B cell (primary cell): ENCODE measurements at regions of chr18 and their contacts with region 1.

Region 1: GRCh38 chr18:76803814-76804213 is 18.5 kb upstream of the ZNF236 start:
- DNase-seq: peak; percentile 76
- ATAC-seq: peak; percentile 66
- H3K4me3 ChIP-seq: no peak overlapping the region
- H3K4me3 Mint-ChIP-seq: peak overlapping the region; percentile 56
- H3K27ac ChIP-seq: no peak overlapping the region
- H3K27ac Mint-ChIP-seq: no peak overlapping the region
- H3K4me1 ChIP-seq: peaks cover 15 to 19% of the 10 kb centered on the region in 2 donors
- H3K4me1 Mint-ChIP-seq: peaks cover 13% of the 10 kb centered on the region
- H3K27me3 ChIP-seq: peaks cover 0 to 9% (median 2%) of the 10 kb centered on the region in 4 experiments
- H3K27me3 Mint-ChIP-seq: peaks cover 5% of the 10 kb centered on the region
- CTCF ChIP-seq: peak; percentile 90

Region 2: GRCh38 chr18:76672627-76673026 is 131.2 kb before region 1 on chr18:
- CTCF ChIA-PET with region 1: no interaction called
- POLR2A ChIA-PET with region 1: no interaction called
- intact Hi-C with region 1: no loop called
- DNase-seq: no peak
- ATAC-seq: no peak
- H3K4me3 ChIP-seq: no peak overlapping the region
- H3K4me3 Mint-ChIP-seq: no peak overlapping the region
- H3K27ac ChIP-seq: no peak overlapping the region
- H3K27ac Mint-ChIP-seq: no peak overlapping the region
- H3K4me1 ChIP-seq: no peaks in the 10 kb centered on the region
- H3K4me1 Mint-ChIP-seq: no peaks in the 10 kb centered on the region
- H3K27me3 ChIP-seq: no peaks in the 10 kb centered on the region
- H3K27me3 Mint-ChIP-seq: peaks cover 3% of the 10 kb centered on the region
- CTCF ChIP-seq: no peak

Region 3: GRCh38 chr18:76847916-76848315 is 44.1 kb after region 1 on chr18:
- CTCF ChIA-PET with region 1: interaction called, 9 read pairs
- POLR2A ChIA-PET with region 1: no interaction called
- intact Hi-C with region 1: loop called (anchors 5 kb)
- DNase-seq: no peak
- ATAC-seq: no peak
- H3K4me3 ChIP-seq: no peak overlapping the region
- H3K4me3 Mint-ChIP-seq: no peak overlapping the region
- H3K27ac ChIP-seq: no peak overlapping the region
- H3K27ac Mint-ChIP-seq: no peak overlapping the region
- H3K4me1 ChIP-seq: no peaks in the 10 kb centered on the region
- H3K4me1 Mint-ChIP-seq: peaks cover 5% of the 10 kb centered on the region
- H3K27me3 ChIP-seq: no peaks in the 10 kb centered on the region
- H3K27me3 Mint-ChIP-seq: no peaks in the 10 kb centered on the region
- CTCF ChIP-seq: no peak

Region 4: GRCh38 chr18:77207540-77207939 is 403.7 kb after region 1 on chr18:
- CTCF ChIA-PET with region 1: interaction called, 20 read pairs
- POLR2A ChIA-PET with region 1: no interaction called
- intact Hi-C with region 1: loop called (anchors 1 kb)
- DNase-seq: peak; percentile 65
- ATAC-seq: peak; percentile 65
- H3K4me3 ChIP-seq: no peak overlapping the region
- H3K4me3 Mint-ChIP-seq: peak overlapping the region; percentile 70
- H3K27ac ChIP-seq: no peak overlapping the region
- H3K27ac Mint-ChIP-seq: peak overlapping the region; percentile 65
- H3K4me1 ChIP-seq: peaks cover 4 to 28% of the 10 kb centered on the region in 2 donors
- H3K4me1 Mint-ChIP-seq: peaks cover 30% of the 10 kb centered on the region
- H3K27me3 ChIP-seq: peaks cover 0 to 7% (median 0%) of the 10 kb centered on the region in 4 experiments
- H3K27me3 Mint-ChIP-seq: peaks cover 4% of the 10 kb centered on the region
- CTCF ChIP-seq: peak; percentile 70

Region 5: GRCh38 chr18:77650799-77651385 is 847.1 kb after region 1 on chr18:
- CTCF ChIA-PET with region 1: interaction called, 16 read pairs
- POLR2A ChIA-PET with region 1: no interaction called
- intact Hi-C with region 1: no loop called
- DNase-seq: peak; percentile 36
- ATAC-seq: peak; percentile 43
- H3K4me3 ChIP-seq: no peak overlapping the region
- H3K4me3 Mint-ChIP-seq: no peak overlapping the region
- H3K27ac ChIP-seq: no peak overlapping the region
- H3K27ac Mint-ChIP-seq: no peak overlapping the region
- H3K4me1 ChIP-seq: peaks cover 0 to 5% of the 10 kb centered on the region in 2 donors
- H3K4me1 Mint-ChIP-seq: no peaks in the 10 kb centered on the region
- H3K27me3 ChIP-seq: peaks cover 0 to 13% (median 2%) of the 10 kb centered on the region in 4 experiments
- H3K27me3 Mint-ChIP-seq: peaks cover 11% of the 10 kb centered on the region
- CTCF ChIP-seq: peak; percentile 63